ENCODE measurements at regions of chr7 and their contacts with region 1.

Region 1: GRCh38 chr7:32639122-32639521 is 143.8 kb downstream of the AVL9 start:
- DNase-seq: no peak
- H3K4me3 ChIP-seq: no peak overlapping the region
- H3K27ac ChIP-seq: no peak overlapping the region
- H3K4me1 ChIP-seq: no peaks in the 10 kb centered on the region
- H3K27me3 ChIP-seq: no peaks in the 10 kb centered on the region
- CTCF ChIP-seq: no peak

Region 2: DNA sequence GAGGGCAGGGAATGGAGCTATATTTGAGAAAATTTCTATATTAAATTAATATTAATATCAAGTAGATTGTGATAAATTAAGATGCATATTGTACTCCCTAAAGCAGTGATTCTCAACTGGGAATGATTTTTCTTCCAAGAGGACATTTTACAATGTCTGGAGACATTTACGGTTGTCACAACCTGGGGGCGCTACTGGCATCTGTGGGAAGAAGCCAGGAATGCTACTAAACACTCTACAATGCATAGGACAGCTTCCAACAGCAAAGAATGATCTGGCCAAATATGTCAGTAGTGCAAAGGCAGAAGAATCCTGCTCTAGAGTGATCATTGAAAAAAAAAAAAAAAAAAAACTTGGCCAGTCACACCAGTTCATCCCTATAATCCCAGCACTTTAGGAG is 248.9 kb before region 1 on chr7:
- CTCF ChIA-PET with region 1: interaction called, 39 read pairs
- dilution Hi-C with region 1: no loop called
- in situ Hi-C with region 1: no loop called
- intact Hi-C with region 1: no loop called
- DNase-seq: no peak
- H3K4me3 ChIP-seq: no peak overlapping the region
- H3K27ac ChIP-seq: no peak overlapping the region
- H3K4me1 ChIP-seq: no peaks in the 10 kb centered on the region
- H3K27me3 ChIP-seq: no peaks in the 10 kb centered on the region
- CTCF ChIP-seq: peak in 1 of 2 donors; percentile 42